Activated naive CD4-positive, alpha-beta T cell treated with anti-CD3 and anti-CD28 coated beads for 36 hours (primary cell): ENCODE measurements at regions of chr5 and their contacts with region 1.

Region 1: GRCh38 chr5:126354012-126354857 is 69.0 kb upstream of the GRAMD2B start:
- DNase-seq: no peak
- H3K4me3 Mint-ChIP-seq: peak overlapping the region; percentile 33
- H3K27ac Mint-ChIP-seq: no peak overlapping the region
- H3K4me1 Mint-ChIP-seq: peaks cover 12% of the 10 kb centered on the region
- H3K27me3 Mint-ChIP-seq: no peaks in the 10 kb centered on the region

Region 2: GRCh38 chr5:125550274-125550673 is 804.0 kb before region 1 on chr5:
- CTCF ChIA-PET with region 1: no interaction called
- intact Hi-C with region 1: no loop called
- DNase-seq: no peak
- H3K4me3 Mint-ChIP-seq: no peak overlapping the region
- H3K27ac Mint-ChIP-seq: no peak overlapping the region
- H3K4me1 Mint-ChIP-seq: no peaks in the 10 kb centered on the region
- H3K27me3 Mint-ChIP-seq: no peaks in the 10 kb centered on the region

Region 3: DNA sequence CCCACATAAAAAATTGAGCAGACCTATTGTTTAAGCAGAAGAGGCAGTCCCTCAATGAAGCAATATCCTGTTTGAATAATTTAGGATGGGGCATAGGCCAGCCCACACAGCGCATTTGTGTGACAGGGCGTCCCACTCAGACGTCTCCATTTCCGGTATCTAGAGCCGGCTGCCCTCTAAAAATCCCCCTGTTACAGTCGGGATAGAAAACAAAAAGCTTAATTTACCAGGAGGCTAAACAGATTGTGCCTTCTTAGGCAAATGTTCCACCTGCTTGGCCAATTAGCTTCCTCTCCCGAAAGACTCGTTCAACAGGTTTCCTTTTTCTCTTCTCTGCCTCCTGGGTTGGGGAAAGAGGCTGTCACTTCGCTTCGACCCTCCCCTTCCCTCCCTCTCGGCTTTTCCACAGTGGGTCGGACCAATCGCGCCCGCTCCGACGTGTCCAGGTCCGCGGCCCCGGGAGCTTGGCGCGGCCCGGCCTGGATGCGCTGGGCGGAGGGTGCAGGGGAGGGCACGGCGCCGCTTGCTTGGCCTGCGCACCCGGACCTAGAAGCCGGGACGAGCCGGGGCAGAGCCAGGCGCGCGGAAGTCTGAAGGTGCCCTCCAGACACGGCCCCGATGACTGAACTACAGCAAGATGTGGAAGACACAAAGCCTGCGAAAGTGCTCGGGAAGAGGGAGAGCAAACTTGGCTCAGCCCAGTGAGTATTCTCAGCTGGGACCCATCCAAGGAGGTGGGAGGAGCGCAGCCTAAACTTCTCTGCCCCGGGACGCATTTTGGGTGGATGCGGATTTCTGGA is 69.0 kb after region 1 on chr5 and contains the start of gene GRAMD2B:
- CTCF ChIA-PET with region 1: interaction called, 8 read pairs
- intact Hi-C with region 1: loop called (anchors 1 kb)
- DNase-seq: peak; percentile 87
- H3K4me3 Mint-ChIP-seq: peak within 1 kb of the TSS; percentile 81
- H3K27ac Mint-ChIP-seq: peak within 1 kb of the TSS; percentile 88
- H3K4me1 Mint-ChIP-seq: peaks cover 29% of the 10 kb centered on the region
- H3K27me3 Mint-ChIP-seq: no peaks in the 10 kb centered on the region
- total RNA-seq, gene GRAMD2B: 8.7 to 10.8 TPM

Region 4: GRCh38 chr5:126490167-126490940 is 136.1 kb after region 1 on chr5:
- CTCF ChIA-PET with region 1: interaction called, 3 read pairs
- intact Hi-C with region 1: loop called (anchors 1 kb)
- DNase-seq: no peak
- H3K4me3 Mint-ChIP-seq: no peak overlapping the region
- H3K27ac Mint-ChIP-seq: no peak overlapping the region
- H3K4me1 Mint-ChIP-seq: no peaks in the 10 kb centered on the region
- H3K27me3 Mint-ChIP-seq: no peaks in the 10 kb centered on the region

Region 5: GRCh38 chr5:126544087-126544740 is 190.0 kb after region 1 on chr5:
- CTCF ChIA-PET with region 1: interaction called, 202 read pairs
- intact Hi-C with region 1: loop called (anchors 1 kb)
- DNase-seq: peak; percentile 68
- H3K4me3 Mint-ChIP-seq: no peak overlapping the region
- H3K27ac Mint-ChIP-seq: no peak overlapping the region
- H3K4me1 Mint-ChIP-seq: no peaks in the 10 kb centered on the region
- H3K27me3 Mint-ChIP-seq: no peaks in the 10 kb centered on the region

Region 6: DNA sequence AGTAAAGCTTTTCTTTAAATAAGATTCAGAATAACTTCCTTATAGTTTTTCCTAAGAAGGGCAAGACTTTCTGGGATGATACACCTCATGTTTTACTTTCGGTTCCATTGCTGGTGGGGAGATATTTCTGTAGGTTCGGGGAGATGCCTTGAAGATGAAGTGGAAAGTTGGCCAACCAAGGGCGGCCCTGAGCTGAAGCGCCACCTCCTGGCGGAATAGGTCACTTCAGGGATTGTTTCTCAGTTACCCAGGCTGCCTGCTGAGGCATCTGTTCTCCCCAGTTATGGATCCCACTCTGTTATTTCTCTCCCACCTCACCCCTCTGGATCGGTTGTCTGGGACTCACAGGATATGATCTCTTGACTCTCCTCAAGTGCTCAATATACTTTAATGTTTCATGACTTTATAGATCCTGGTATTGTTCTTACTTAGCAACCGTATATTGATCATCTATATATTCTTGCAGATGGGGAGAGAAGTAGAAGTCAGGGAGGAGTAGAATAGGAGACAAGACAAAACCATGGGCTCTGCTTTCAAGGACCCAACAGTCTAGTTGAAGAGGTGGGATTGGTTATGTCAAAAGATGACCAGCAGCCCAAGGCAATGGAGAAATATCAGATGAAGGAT is 959.7 kb after region 1 on chr5:
- CTCF ChIA-PET with region 1: no interaction called
- intact Hi-C with region 1: loop called (anchors 10 kb)
- DNase-seq: peak; percentile 81
- H3K4me3 Mint-ChIP-seq: no peak overlapping the region
- H3K27ac Mint-ChIP-seq: no peak overlapping the region
- H3K4me1 Mint-ChIP-seq: peaks cover 4% of the 10 kb centered on the region
- H3K27me3 Mint-ChIP-seq: peaks cover under 1% of the 10 kb centered on the region